T-cell (primary cell): ENCODE measurements at regions of chr3 and their contacts with region 1.

Region 1: DNA sequence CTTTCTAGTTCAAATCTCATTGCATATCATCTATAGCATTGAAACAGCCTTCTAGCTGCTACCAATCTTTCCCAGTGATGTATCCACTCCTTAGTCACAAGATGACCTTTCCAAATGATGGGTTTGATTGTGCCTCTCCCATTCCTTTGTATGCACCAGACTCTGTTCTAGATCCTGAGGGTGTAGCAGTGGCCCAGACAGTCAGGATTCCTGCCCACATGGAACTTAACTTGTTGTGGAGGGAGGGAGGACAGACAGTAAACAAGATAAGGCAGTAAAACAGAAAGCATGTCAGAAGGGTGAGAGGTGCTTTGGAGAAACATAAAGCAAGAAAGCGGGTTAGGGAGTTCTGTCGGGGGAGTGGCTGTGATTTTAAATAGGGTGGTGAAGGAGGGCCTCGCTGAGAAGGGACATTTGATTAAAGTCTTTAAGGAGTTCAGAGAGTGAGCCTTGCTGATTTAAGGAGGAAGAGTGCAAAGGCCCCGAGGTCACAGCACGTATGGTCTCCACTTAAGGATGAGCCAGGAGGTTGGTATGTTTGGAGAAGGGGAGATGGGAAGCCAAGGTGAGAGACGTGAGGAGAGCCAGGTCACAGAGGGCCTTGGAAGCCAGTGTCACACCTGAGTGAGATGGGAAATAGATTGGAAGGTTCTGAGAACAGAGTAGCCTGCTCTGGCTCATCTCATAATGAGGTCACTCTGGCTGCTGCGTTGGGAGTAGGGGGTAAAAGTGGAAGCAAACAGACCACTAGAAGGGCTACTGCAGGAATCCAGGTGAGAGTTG is 38.4 kb downstream of the FAM43A start:
- DNase-seq: no peak
- ATAC-seq: no peak
- H3K4me3 ChIP-seq: no peak overlapping the region
- H3K4me3 Mint-ChIP-seq: no peak overlapping the region
- H3K27ac ChIP-seq: no peak overlapping the region
- H3K27ac Mint-ChIP-seq: no peak overlapping the region
- H3K4me1 ChIP-seq: peaks cover 0 to 2% of the 10 kb centered on the region in 2 experiments
- H3K4me1 Mint-ChIP-seq: peaks cover 0 to 2% (median 0%) of the 10 kb centered on the region in 3 donors
- H3K27me3 ChIP-seq: peaks cover 0 to 7% of the 10 kb centered on the region in 2 experiments
- H3K27me3 Mint-ChIP-seq: peaks cover under 1 to 7% of the 10 kb centered on the region in 2 donors

Region 2: GRCh38 chr3:194671900-194672808 is 51.9 kb before region 1 on chr3 and contains the start of gene LSG1:
- CTCF ChIA-PET with region 1: no interaction called
- POLR2A ChIA-PET with region 1: no interaction called
- DNase-seq: peak; percentile 77 to 97 (median 87)
- ATAC-seq: peak; percentile 95 to 96 (median 96)
- H3K4me3 ChIP-seq: peak within 1 kb of the TSS; percentile 68 to 95
- H3K4me3 Mint-ChIP-seq: peak within 1 kb of the TSS; percentile 98 to 99 (median 99)
- H3K27ac ChIP-seq: peak within 1 kb of the TSS; percentile 90
- H3K27ac Mint-ChIP-seq: peak within 1 kb of the TSS; percentile 98 to 99
- H3K4me1 ChIP-seq: peaks cover 10 to 14% of the 10 kb centered on the region in 2 experiments
- H3K4me1 Mint-ChIP-seq: peaks cover 39 to 45% (median 42%) of the 10 kb centered on the region in 3 donors
- H3K27me3 ChIP-seq: no peaks in the 10 kb centered on the region
- H3K27me3 Mint-ChIP-seq: peaks cover 0 to 5% of the 10 kb centered on the region in 2 donors
- total RNA-seq, gene LSG1: 40.0 to 83.5 (median 49.5) TPM

Region 3: GRCh38 chr3:194797555-194798250 is 73.7 kb after region 1 on chr3:
- CTCF ChIA-PET with region 1: interaction called, 4 to 12 read pairs
- POLR2A ChIA-PET with region 1: no interaction called
- DNase-seq: no peak
- ATAC-seq: no peak
- H3K4me3 ChIP-seq: no peak overlapping the region
- H3K4me3 Mint-ChIP-seq: no peak overlapping the region
- H3K27ac ChIP-seq: no peak overlapping the region
- H3K27ac Mint-ChIP-seq: no peak overlapping the region
- H3K4me1 ChIP-seq: no peaks in the 10 kb centered on the region
- H3K4me1 Mint-ChIP-seq: peaks cover 0 to 10% (median 6%) of the 10 kb centered on the region in 3 donors
- H3K27me3 ChIP-seq: peaks cover 0 to 5% of the 10 kb centered on the region in 2 experiments
- H3K27me3 Mint-ChIP-seq: peaks cover 1 to 4% of the 10 kb centered on the region in 2 donors